Cardiac septum (tissue), 1 donor: ENCODE measurements at regions of chr12 and their contacts with region 1.

Region 1: GRCh38 chr12:7060353-7060954 is at the start of gene C1S:
- DNase-seq: no peak
- total RNA-seq, gene C1S: 69.0 TPM

Region 2: DNA sequence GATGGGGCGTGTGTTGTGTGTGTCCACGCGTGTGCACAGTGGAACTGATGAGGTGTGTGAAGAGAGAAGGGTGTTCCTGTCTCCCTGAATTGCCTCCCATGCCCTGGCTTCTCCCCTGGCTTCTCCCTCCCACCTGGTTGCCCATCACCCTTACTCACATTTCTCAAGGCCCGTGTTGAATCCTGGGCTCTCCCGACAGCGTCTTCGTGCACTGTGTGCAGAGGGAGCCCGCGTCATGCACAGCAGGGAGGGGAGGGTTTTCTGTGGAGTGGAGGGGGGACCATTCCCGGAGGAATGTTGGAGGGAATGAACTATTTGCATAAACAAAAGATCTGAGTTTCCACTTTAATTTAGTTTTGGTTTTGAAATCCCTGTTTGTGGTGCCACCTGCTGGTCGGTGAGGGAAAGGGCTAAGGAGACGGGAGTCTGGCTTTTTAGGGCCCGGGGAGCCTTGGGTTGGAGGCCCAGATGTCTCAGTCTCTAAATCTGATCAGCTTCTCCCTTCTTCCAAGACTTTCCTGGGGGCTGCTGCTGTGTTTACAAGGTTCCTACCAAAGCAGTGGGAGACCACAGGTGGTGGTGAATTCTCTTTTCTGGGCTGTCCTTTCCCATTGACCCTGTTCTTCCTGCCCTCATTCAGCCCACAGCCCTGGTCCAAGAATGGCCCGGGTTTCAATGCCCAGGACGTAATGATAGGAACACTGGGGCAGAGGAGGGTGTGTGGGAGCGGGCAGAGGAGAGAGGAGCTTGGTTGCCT is 32.0 kb after region 1 on chr12 and contains the start of gene C1R:
- intact Hi-C with region 1: loop called (anchors 1 kb)
- DNase-seq: peak; percentile 84
- total RNA-seq, gene C1R: 96.9 TPM

Region 3: DNA sequence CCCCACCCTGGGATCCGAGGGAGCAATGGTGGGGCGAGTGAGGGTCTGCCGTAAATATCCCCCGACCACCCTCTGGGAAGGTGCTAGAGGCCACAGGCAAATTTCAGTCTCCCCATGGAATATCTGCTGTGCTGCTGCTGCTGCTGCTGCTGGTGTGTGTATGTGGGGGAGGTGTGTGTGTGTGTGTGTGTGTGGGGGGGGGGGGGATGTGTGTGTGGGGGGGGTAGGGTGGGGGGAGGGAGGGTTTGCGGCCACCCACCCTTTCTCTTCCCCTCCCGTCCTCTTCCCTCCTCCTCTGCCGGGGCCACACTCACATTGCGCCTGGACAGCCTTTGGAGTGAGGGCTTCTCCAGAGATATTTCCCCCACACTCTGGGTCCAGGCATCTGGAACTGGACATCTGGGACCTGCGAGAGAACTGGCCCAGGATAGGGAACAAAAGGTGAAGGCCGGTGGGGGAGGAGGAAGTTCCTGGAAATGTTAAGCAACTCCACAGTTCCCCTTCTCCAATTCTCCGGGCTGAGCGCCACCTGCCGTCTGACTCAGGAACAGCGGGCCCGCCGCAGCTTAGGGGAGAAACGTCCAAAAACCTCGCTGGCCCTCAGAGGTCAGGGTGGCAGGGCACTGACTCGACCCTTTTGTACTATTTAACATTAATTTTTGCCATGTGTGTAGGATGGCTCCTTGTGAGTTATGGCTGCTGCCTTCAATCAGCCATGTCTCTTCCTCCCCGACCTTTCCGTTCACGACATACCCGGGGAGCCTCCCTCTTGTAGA is 48.5 kb after region 1 on chr12 and contains the start of gene C1RL:
- intact Hi-C with region 1: loop called (anchors 2 kb)
- DNase-seq: peak; percentile 94
- total RNA-seq, gene C1RL: 10.5 TPM